Activated naive CD4-positive, alpha-beta T cell treated with anti-CD3 and anti-CD28 coated beads for 36 hours (primary cell): ENCODE measurements at regions of chr19 and their contacts with region 1.

Region 1: DNA sequence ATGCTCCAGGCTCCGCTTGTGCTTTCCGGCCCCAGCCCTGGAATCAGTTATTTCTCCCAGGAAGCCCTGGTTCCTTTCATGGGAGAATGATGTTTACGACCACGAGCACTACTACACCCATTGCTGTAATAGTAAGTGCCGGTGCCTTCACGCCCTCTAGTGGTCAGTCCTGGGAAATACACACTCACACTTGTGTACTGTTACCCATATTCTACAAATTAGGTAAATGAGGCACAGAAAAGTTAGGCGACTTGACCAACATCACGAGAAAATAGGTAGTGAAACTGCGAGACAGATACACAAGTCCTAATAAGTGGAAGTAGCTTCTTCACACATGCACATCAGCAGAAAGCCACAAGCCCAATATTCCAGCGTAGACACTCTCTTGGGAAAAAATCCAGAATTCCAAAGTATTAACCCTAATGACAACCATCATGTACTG is 21.7 kb downstream of the CEACAM21 start:
- DNase-seq: peak; percentile 92
- H3K4me3 Mint-ChIP-seq: peak overlapping the region; percentile 49
- H3K27ac Mint-ChIP-seq: no peak overlapping the region
- H3K4me1 Mint-ChIP-seq: peaks cover 9% of the 10 kb centered on the region
- H3K27me3 Mint-ChIP-seq: peaks cover 3% of the 10 kb centered on the region

Region 2: GRCh38 chr19:41310033-41310758 is 287.4 kb before region 1 on chr19 and contains the start of gene CCDC97:
- CTCF ChIA-PET with region 1: no interaction called
- intact Hi-C with region 1: loop called (anchors 5 kb)
- DNase-seq: peak; percentile 90
- H3K4me3 Mint-ChIP-seq: peak within 1 kb of the TSS; percentile 95
- H3K27ac Mint-ChIP-seq: peak within 1 kb of the TSS; percentile 96
- H3K4me1 Mint-ChIP-seq: peaks cover 70% of the 10 kb centered on the region
- H3K27me3 Mint-ChIP-seq: no peaks in the 10 kb centered on the region
- total RNA-seq, gene CCDC97: 14.9 to 15.8 TPM

Region 3: DNA sequence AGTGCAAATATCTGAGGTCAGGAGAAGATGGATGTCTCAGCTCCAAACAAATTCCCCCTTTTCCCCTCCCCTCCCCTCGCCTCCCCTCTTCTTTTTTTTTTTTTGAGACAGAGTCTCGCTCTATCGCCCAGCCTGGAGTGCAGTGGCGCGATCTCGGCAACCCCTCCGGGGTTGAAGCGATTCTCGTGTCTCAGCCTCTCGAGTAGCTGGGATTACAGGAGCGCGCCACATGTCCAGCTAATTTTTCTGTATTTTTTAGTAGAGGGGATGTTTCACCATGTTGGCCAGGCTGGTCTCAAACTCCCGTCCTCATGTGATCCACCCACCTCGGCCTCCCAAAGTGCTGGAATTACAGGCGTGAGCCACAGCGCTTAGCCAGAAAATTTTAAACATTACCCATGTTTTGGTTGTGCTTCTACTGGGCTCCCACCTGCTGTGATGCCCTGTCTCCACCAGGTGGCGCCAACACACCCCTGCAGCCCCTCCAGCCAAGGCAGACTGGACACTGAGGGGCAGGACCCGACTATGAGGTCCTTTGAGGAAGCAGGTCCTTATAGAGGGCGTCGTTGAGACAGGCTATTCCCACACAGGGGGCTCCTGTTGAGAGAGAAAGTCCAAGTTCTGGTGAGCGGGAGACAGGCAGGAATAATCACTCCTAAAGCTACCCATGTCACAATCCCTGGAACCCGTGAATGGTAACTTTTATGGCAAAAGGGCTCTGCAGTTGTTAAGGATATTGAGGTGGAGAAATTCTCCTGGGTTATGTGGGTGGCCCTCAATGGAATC is 148.3 kb before region 1 on chr19:
- CTCF ChIA-PET with region 1: interaction called, 92 read pairs
- intact Hi-C with region 1: loop called (anchors 1 kb)
- DNase-seq: peak; percentile 84
- H3K4me3 Mint-ChIP-seq: peak overlapping the region; percentile 77
- H3K27ac Mint-ChIP-seq: peak overlapping the region; percentile 56
- H3K4me1 Mint-ChIP-seq: peaks cover 11% of the 10 kb centered on the region
- H3K27me3 Mint-ChIP-seq: no peaks in the 10 kb centered on the region

Region 4: DNA sequence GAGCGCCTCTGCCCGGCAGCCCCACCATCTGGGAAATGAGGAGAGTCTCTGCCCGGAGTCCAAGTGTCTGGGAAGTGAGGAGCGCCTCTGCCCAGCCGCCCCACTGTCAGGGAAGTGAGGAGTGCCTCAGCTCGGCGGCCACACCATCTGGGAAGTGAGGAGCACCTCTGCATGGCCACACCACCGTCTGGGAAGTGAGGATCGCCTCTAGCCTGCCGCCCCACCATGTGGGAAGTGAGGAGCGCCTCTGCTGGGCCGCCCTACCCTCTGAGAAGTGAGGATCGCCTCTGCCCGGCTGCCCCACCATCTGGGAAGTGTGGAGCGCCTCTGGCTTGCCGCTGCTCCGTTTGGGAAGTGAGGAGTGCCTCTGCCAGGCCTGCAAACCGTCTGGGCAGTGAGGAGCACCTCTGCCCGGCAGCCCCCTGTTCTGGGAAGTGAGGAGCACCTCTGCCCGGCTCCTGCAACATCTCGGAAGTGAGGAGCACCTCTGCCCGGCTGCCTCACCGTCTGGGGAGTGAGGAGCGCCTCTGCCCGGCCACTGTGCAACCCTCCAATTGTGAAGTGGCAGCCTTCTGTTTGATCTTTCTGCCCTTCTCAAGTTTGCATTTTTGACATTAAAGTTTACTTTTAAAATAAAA is 82.5 kb before region 1 on chr19:
- CTCF ChIA-PET with region 1: no interaction called
- intact Hi-C with region 1: loop called (anchors 1 kb)
- DNase-seq: no peak
- H3K4me3 Mint-ChIP-seq: no peak overlapping the region
- H3K27ac Mint-ChIP-seq: no peak overlapping the region
- H3K4me1 Mint-ChIP-seq: peaks cover 10% of the 10 kb centered on the region
- H3K27me3 Mint-ChIP-seq: no peaks in the 10 kb centered on the region

Region 5: DNA sequence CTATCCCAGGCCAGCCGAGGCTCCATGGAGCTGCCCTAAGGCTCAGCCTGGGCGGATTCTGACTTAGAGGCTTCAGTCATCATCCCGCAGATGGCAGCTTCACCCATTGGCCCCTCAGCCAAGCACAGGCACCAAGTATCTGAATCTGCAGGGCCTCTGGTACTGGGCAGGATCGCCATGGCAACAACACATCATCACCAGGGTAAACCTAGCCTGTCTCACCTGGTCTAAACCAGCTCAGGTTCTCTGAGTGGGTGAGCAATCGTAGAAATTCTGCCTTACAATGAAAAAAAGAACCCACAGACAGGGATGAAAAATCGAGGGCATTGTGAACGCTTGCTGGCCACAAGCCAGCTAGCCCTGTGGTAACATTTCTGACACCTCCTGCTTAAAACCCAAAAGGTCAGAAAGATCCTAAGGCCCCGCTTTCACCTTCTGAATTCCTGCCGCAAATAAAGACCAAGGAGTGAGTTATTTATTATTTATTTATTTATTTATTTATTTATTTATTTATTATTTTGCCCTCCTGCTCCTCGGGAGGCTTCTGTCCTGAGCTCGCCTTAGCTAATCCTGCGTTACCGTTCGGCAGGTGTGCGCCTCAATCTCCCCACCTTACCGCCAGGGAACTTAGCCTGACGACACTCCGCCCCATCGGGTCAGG is 33.6 kb before region 1 on chr19:
- CTCF ChIA-PET with region 1: interaction called, 21 read pairs
- intact Hi-C with region 1: loop called (anchors 1 kb)
- DNase-seq: peak; percentile 80
- H3K4me3 Mint-ChIP-seq: peak overlapping the region; percentile 84
- H3K27ac Mint-ChIP-seq: peak overlapping the region; percentile 35
- H3K4me1 Mint-ChIP-seq: peaks cover 76% of the 10 kb centered on the region
- H3K27me3 Mint-ChIP-seq: no peaks in the 10 kb centered on the region

Region 6: DNA sequence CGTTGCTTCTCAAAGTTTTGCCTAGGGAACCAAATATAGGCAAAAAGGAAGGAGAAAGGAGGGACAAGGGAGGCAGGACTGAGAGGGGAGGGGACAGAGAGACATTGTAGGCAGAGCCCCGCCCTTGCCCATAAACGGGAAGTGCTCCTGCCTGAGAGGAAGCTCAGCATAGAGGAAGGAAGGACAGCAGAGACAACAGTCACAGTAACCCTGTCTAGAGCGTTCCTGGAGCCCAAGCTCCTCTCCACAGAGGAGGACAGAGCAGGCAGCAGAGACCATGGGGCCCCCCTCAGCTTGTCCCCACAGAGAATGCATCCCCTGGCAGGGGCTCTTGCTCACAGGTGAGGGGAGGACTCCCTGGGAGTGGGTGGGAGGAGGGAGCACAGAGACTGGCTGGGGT is 21.6 kb before region 1 on chr19 and contains the start of gene CEACAM21:
- CTCF ChIA-PET with region 1: interaction called, 60 read pairs
- intact Hi-C with region 1: loop called (anchors 1 kb)
- DNase-seq: peak; percentile 82
- H3K4me3 Mint-ChIP-seq: peak within 1 kb of the TSS; percentile 78
- H3K27ac Mint-ChIP-seq: peak within 1 kb of the TSS; percentile 75
- H3K4me1 Mint-ChIP-seq: peaks cover 21% of the 10 kb centered on the region
- H3K27me3 Mint-ChIP-seq: no peaks in the 10 kb centered on the region
- total RNA-seq, gene CEACAM21: 32.2 to 33.6 TPM

Region 7: DNA sequence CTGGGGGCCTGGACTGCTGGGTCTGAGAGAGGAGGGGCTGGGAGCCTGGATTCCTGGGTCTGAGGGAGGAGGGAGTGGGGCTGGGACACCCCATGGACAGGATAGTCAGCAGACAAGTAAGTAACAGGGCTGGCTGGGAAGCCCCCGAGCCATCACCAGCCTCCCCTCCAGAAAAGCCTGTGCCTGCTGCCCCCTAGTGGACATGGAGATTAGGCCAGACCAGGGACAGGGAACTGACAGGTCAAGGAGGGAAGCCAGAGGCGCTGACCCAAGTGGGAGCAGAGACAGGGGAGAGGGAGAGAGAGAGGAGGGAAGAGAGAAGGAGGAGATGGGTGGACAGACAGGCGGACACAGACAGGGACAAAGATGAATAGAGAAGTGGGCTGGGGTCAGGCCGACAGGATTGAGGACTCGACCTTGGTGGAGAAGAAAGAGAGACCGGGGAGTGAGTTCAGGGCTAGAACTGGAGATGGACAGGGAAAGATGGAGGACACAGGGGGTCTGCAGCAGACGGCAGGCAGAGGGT is 337.3 kb after region 1 on chr19:
- CTCF ChIA-PET with region 1: no interaction called
- intact Hi-C with region 1: no loop called
- DNase-seq: peak; percentile 94
- H3K4me3 Mint-ChIP-seq: no peak overlapping the region
- H3K27ac Mint-ChIP-seq: peak overlapping the region; percentile 44
- H3K4me1 Mint-ChIP-seq: peaks cover 39% of the 10 kb centered on the region
- H3K27me3 Mint-ChIP-seq: no peaks in the 10 kb centered on the region